WTC11 (cell line): ENCODE measurements at regions of chr1 and their contacts with region 1.

Region 1: GRCh38 chr1:165697881-165698760 is at the start of gene ALDH9A1:
- DNase-seq: peak; percentile 91
- ATAC-seq: peak; percentile 99
- H3K4me3 Mint-ChIP-seq: peak within 1 kb of the TSS; percentile 93
- H3K27ac Mint-ChIP-seq: peak within 1 kb of the TSS; percentile 95
- H3K4me1 Mint-ChIP-seq: peaks cover 14% of the 10 kb centered on the region
- H3K27me3 Mint-ChIP-seq: no peaks in the 10 kb centered on the region
- CTCF ChIP-seq: no peak
- total RNA-seq, gene ALDH9A1: 51.6 to 60.5 TPM (median 51.9 TPM) in 3 replicates

Region 2: DNA sequence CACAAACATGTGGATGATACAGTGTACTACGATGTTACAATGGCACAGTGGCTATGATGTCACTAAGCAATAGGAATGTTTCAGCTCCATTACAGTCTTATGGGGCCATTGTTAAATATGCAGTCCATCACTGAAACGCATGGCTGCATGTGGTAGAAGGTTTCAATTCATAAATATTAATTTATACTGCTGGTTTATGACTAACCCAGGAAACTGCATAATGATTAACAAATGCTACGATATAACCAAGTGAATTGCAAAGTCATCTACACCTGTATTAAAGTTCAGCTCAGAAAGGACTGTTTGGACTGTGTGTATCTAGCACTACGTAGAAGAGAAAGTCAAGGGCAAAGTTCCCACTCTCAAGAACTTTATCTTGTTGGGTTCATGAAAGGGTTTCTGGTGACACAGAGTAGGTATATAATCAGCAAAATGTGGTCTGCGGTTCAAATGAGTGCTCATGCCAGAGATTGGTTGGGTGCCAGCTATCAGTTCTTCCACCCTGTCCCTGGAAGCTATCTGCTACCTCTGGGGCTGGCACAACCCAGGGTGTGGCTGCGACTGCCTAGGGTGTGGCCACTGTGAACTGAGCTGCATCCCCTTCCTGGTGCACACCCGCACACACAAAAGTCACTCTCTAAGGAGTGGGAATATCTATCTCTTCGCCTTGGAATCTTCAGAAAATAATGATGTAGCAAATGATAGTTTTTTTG is 52.3 kb before region 1 on chr1:
- CTCF ChIA-PET with region 1: no interaction called
- POLR2A ChIA-PET with region 1: no interaction called
- DNase-seq: no peak
- ATAC-seq: no peak
- H3K4me3 Mint-ChIP-seq: no peak overlapping the region
- H3K27ac Mint-ChIP-seq: no peak overlapping the region
- H3K4me1 Mint-ChIP-seq: peaks cover 8% of the 10 kb centered on the region; the same call in 1 of the 2 replicates
- H3K27me3 Mint-ChIP-seq: no peaks in the 10 kb centered on the region
- CTCF ChIP-seq: no peak

Region 3: GRCh38 chr1:165686121-165686970 is 11.8 kb before region 1 on chr1:
- CTCF ChIA-PET with region 1: interaction called, 15 read pairs
- POLR2A ChIA-PET with region 1: no interaction called
- DNase-seq: peak; percentile 26
- ATAC-seq: peak; percentile 88
- H3K4me3 Mint-ChIP-seq: no peak overlapping the region
- H3K27ac Mint-ChIP-seq: peak overlapping the region; percentile 37
- H3K4me1 Mint-ChIP-seq: peaks cover 12% of the 10 kb centered on the region
- H3K27me3 Mint-ChIP-seq: no peaks in the 10 kb centered on the region
- CTCF ChIP-seq: no peak

Region 4: DNA sequence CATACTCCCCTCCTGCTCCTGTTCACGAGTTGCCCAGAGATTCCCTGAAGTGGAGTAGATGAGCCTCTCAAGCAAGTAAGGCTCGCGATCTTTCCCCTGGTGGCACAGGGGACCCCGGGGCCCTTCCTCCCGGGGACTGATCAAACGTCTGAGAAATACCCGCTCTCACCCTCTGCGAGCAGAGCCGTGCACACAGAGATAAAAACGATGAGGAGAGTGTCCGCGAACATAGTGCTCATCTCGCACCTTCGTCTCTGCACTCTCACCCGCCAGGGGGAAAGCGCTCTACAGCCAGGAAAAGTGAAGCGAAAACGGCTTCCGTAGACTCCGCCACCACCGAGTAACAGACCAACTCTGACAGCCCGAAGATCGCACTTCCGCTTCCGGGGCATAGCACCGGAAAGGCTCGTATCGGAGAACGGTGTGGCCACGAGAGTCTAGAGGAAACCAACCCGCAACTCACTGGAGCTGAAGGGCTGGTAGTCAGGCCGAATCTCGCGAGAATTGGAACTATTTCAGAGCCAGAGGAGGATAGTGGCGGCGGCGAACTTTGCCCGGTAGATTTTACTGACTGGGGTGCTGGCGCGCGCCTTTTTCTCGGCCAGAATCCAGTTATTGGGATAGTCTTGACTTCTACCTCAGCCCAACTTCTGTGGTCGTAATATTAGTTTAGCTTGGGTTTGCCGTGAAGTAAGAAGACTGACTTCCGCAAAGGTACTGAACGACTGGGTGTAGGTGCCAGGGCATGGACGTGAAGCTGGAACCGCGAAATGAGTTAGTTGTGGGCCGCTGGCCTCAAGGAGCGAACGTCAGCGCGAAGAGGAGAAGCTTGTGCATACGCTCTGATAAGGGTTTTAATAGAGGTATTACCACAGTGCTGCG is 70.6 kb after region 1 on chr1 and contains the start of gene TMCO1:
- CTCF ChIA-PET with region 1: interaction called, 12 read pairs
- POLR2A ChIA-PET with region 1: no interaction called
- DNase-seq: peak; percentile 88
- ATAC-seq: peak; percentile 99
- H3K4me3 Mint-ChIP-seq: peak within 1 kb of the TSS; percentile 95
- H3K27ac Mint-ChIP-seq: peak within 1 kb of the TSS; percentile 96
- H3K4me1 Mint-ChIP-seq: peaks cover 14% of the 10 kb centered on the region
- H3K27me3 Mint-ChIP-seq: no peaks in the 10 kb centered on the region
- CTCF ChIP-seq: no peak
- total RNA-seq, gene TMCO1: 51.9 to 52.8 TPM (median 52.5 TPM) in 3 replicates

Region 5: DNA sequence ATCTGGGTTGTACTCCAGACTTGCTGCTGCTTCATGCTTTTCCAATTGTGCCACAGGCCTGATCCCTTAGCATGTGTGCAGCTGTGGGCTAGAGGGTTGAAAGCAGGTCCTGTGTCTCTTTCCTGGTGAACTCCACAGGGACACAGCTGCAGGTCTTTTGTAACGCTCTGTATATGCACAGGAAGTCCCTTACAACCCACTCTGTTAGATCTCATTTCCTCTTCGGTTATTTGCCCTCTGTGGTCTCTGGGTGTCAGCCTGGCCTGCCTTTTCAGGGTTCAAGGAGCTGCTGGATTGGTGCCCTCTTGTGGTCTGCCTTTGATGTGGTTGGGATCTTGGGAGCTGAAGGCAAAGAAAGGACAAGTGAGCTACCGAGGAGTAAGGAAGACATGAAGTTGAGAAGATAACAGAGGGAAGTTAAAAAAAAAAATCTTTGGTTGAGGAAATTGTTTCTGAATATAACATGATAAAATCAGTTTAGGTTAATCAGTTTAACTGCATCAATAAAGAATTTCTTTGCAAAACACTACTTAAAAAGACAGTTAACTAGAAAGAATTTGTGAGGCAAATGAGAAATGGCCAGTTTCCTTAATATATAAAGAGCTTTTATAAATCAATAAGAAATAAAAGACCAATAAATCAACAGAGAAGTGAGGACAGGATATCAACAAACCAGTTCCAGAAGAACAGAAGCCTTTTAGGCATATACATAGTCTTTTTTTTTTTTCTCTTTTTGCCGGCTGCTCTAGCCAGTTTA is 173.4 kb after region 1 on chr1:
- CTCF ChIA-PET with region 1: interaction called, 11 read pairs
- POLR2A ChIA-PET with region 1: no interaction called
- DNase-seq: peak; percentile 49
- ATAC-seq: peak; percentile 75
- H3K4me3 Mint-ChIP-seq: no peak overlapping the region
- H3K27ac Mint-ChIP-seq: no peak overlapping the region
- H3K4me1 Mint-ChIP-seq: peaks cover 52% of the 10 kb centered on the region
- H3K27me3 Mint-ChIP-seq: no peaks in the 10 kb centered on the region
- CTCF ChIP-seq: no peak